Right ventricle myocardium superior (tissue), 1 donor: ENCODE measurements at regions of chr5 and their contacts with region 1.

Region 1: DNA sequence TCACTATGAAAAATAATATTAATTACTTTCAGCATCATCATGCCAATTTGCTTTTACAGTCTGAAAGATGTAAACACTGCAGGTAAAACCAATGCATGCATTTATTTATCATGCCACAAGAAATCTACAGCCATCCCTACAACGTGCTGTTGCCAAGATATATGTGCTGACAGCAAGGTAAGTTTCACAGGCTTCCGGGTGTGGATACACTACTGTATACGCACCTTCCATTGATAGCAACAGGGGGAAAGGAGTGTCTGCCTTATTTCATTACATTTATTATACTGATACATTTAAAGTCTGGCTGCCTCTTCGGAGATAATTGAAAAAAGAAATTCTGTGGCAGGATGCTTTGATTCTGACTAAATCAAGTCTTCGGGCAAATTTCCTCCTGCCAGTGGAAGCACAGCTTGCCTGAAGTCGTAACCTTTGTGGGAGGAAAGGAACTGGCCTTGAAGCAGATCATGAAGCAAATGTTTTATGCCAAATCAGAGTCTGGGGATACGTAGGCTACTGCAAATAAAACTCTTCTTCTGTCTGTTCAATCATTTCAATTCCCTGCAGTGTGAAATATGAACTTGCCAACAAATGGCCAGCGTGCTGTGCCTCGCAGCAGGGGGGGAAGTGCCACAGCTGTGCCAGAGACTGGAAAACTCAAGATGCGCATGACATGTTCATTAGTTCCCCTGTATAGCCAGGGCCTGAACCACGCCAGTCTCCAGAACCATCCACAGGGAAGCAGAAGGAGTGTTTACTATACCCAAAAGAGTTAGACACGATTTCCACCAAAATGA is 268.1 kb downstream of the EFNA5 start:
- DNase-seq: no peak
- ATAC-seq: peak; percentile 73

Region 2: GRCh38 chr5:107232788-107233187 is 169.8 kb before region 1 on chr5:
- intact Hi-C with region 1: no loop called
- DNase-seq: no peak
- ATAC-seq: no peak

Region 3: DNA sequence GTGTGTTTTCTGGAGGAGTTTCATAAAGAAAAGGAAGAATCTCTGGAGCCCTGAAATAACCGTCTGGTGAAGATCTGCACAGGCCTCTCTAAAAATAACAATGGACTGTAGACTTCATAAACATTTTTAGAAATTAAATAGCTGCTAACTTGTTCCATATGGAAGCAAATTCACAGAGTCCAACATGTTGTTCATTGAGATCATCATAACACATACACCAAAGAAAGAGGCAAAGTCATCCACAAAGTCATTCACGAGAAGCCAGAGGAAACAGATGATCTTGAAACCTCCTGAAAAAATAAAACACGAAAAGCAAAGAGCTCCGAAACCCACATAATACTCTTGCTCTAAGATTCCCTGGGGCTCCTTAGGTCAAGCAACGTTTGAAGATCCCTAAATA is 79.7 kb before region 1 on chr5:
- intact Hi-C with region 1: no loop called
- DNase-seq: no peak
- ATAC-seq: no peak

Region 4: GRCh38 chr5:107469485-107470294 is 67.1 kb after region 1 on chr5:
- intact Hi-C with region 1: no loop called
- DNase-seq: no peak
- ATAC-seq: no peak

Region 5: DNA sequence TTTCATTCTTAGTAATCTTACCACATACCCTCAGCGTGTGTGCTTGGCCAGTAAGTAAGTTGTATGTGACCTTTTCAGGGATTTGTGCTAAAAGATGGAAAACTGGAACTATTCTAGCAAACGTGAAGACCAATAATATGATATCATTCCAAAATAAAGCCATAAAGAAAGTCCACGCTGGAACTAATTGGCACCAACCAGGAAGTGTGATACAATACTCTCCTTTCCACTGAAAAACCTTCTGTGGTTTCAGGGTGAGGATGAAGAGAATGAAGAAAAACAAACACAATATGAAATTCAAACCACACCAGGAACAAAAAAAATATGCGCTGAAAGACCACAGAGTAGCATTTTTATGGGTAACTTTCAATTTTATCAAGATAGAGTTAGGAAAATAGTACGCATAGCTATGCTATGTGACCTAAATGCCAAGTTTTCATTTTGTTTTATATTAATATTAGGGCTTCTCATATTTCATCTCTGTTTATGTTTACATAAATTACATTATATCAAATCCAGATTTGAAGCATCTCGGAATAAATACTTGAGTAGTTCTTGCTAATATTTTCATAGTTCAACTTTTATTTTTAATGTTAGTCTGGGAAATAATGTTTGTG is 162.4 kb after region 1 on chr5:
- intact Hi-C with region 1: loop called (anchors 10 kb)
- DNase-seq: no peak
- ATAC-seq: no peak

Region 6: DNA sequence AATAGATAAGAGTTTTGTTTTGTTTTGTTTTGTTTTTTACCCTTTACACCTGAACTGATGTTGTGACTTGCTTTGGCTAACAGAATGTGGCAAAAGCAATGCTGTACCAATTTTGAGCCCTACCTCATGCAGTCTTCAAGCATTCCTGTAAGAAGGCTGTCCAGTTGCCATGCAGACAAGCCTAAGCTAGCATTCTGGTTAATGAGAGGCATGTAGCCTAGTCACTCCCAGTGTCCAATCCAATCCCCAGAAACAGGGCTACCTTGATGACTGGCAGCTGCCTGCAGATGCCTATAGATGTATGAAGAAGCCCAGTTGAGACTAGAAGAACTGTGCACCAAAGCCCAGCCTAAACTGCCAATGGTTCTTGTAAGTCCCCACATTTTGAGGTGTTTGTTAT is 277.5 kb after region 1 on chr5:
- intact Hi-C with region 1: no loop called
- DNase-seq: no peak
- ATAC-seq: no peak